Left colon (tissue), 2 donors: ENCODE measurements at regions of chrX and their contacts with region 1.

Region 1: GRCh38 chrX:4588893-4589292 is 875.4 kb upstream of the PRKX start:
- DNase-seq: no peak
- ATAC-seq: no peak

Region 2: GRCh38 chrX:4528250-4528649 is 60.6 kb before region 1 on chrX:
- intact Hi-C with region 1: no loop called
- DNase-seq: no peak
- ATAC-seq: no peak

Region 3: GRCh38 chrX:4560192-4560591 is 28.7 kb before region 1 on chrX:
- intact Hi-C with region 1: loop called in 1 of 2 experiments (anchors 2 kb)
- DNase-seq: no peak
- ATAC-seq: no peak